A673 (cell line): ENCODE measurements at regions of chr1 and their contacts with region 1.

Region 1: GRCh38 chr1:23403735-23404486 is 20.6 kb downstream of the TCEA3 start:
- DNase-seq: peak; percentile 97
- H3K4me3 ChIP-seq: no peak overlapping the region
- H3K27ac ChIP-seq: peak overlapping the region; percentile 7
- H3K4me1 ChIP-seq: peaks cover 27% of the 10 kb centered on the region
- H3K27me3 ChIP-seq: no peaks in the 10 kb centered on the region
- CTCF ChIP-seq: peak; percentile 97

Region 2: GRCh38 chr1:22976461-22977243 is 427.3 kb before region 1 on chr1:
- CTCF ChIA-PET with region 1: no interaction called
- POLR2A ChIA-PET with region 1: no interaction called
- intact Hi-C with region 1: loop called (anchors 5 kb)
- DNase-seq: peak; percentile 90
- H3K4me3 ChIP-seq: no peak overlapping the region
- H3K27ac ChIP-seq: no peak overlapping the region
- H3K4me1 ChIP-seq: peaks cover 16% of the 10 kb centered on the region
- H3K27me3 ChIP-seq: no peaks in the 10 kb centered on the region
- CTCF ChIP-seq: peak; percentile 94

Region 3: DNA sequence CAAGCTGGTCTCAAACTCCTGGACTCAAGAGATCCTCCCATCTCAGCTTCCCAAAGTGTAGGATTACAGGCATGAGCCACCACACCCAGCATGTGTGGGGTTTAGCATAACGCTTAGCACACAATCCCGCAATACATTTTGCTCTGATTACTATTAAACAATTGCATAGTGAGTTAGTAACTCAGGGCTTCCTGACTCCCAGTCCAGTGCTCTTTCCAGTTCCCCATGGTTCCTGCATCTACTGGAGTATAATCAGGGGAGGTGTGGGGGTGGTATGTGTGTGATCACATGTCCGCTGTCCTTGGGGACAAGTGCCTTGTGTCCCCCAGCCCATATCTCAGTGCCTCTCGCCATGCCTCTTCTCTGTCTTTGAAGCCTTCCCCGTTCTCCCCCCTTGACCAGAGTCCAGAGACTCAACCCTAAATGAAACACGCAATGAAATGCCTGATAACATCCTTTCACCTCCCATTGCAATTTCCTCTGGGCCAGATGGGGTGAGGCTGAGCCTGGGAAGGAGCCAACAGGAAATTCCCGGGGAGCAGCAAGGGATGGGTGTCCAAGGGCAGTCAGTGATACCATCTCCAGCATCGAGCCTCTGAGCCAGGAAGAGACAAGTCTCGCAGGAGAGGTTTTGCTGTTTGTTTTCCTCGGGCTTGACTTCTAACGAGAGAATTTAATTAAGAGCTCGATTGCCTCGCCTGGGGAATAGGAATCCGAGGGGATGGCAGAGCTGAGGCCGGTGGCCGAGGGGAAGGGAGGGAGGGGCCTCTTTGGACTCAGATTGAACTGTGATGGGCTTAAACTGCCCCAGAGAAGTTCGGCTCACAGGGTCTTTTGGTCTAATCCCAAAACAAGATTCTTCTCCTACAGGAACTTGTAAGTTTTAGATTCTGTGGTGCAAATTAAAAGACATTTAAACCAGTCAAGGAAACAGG is 178.9 kb before region 1 on chr1:
- CTCF ChIA-PET with region 1: no interaction called
- POLR2A ChIA-PET with region 1: no interaction called
- intact Hi-C with region 1: loop called (anchors 10 kb)
- DNase-seq: peak; percentile 82
- H3K4me3 ChIP-seq: no peak overlapping the region
- H3K27ac ChIP-seq: no peak overlapping the region
- H3K4me1 ChIP-seq: peaks cover 14% of the 10 kb centered on the region
- H3K27me3 ChIP-seq: no peaks in the 10 kb centered on the region
- CTCF ChIP-seq: no peak

Region 4: GRCh38 chr1:23322770-23323169 is 81.1 kb before region 1 on chr1:
- CTCF ChIA-PET with region 1: no interaction called
- POLR2A ChIA-PET with region 1: no interaction called
- intact Hi-C with region 1: loop called (anchors 10 kb)
- DNase-seq: no peak
- H3K4me3 ChIP-seq: no peak overlapping the region
- H3K27ac ChIP-seq: no peak overlapping the region
- H3K4me1 ChIP-seq: no peaks in the 10 kb centered on the region
- H3K27me3 ChIP-seq: no peaks in the 10 kb centered on the region
- CTCF ChIP-seq: no peak

Region 5: DNA sequence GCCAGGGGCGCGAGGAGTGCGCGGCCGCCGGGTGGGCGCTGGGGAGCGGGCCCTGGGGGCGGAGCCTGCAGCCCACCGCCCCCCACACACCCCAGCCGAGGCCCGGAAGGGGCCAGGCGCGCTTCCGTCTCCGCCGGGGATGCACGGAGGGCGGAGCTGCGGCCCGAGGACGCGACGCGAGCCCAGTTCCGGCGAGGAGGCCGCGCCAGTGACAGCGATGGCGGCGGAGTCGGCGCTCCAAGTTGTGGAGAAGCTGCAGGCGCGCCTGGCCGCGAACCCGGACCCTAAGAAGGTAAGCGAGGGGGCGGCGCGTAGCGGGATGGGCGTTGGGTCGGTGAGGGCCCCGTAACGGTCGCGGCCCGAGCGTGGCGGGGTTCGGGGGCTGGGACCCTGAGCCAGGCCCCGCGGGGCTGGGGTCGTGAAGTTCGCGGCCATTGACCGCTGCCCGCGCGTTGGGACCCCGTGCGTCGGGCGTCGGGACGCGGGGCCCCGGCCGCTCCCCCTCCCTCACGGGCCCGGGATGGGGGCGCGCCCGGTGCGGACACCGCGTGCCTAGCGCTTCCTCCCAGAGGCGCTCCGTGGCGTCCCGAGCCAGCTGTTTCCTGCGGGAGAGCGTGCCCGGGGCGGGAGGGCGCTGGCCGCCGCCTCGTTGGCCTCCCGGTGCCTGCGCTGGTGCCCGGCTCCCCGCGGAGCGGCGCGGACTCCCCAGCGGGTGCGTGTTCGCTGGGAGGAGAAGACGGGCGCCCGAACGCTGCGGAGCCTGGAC is 339.6 kb after region 1 on chr1 and contains the start of gene ELOA:
- CTCF ChIA-PET with region 1: no interaction called
- POLR2A ChIA-PET with region 1: no interaction called
- intact Hi-C with region 1: no loop called
- DNase-seq: peak; percentile 84
- H3K4me3 ChIP-seq: peak within 1 kb of the TSS; percentile 99
- H3K27ac ChIP-seq: peak within 1 kb of the TSS; percentile 89
- H3K4me1 ChIP-seq: peaks cover 12% of the 10 kb centered on the region
- H3K27me3 ChIP-seq: no peaks in the 10 kb centered on the region
- CTCF ChIP-seq: no peak
- total RNA-seq, gene ELOA: 66.3 and 69.8 TPM in 2 replicates

Region 6: DNA sequence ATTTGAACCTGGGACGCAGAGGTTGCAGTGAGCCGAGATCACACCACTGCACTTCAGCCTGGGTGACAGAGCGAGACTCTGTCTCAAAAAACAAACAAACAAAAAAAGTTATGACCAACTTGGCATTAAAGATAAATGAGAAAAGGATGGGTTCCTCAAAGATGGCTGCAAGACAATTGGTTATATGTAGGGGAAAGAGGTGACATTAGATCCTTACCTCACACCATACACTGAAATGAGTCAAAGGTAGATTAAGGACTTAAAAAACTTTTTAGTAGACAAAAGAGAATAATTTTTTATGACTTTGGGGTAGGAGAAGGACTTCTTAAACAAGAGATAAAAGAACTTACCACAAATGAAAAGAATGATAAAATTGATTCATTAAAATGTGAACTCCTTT is 1753.9 kb after region 1 on chr1:
- CTCF ChIA-PET with region 1: no interaction called
- POLR2A ChIA-PET with region 1: no interaction called
- intact Hi-C with region 1: no loop called
- DNase-seq: no peak
- H3K4me3 ChIP-seq: no peak overlapping the region
- H3K27ac ChIP-seq: no peak overlapping the region
- H3K4me1 ChIP-seq: no peaks in the 10 kb centered on the region
- H3K27me3 ChIP-seq: peaks cover 8% of the 10 kb centered on the region
- CTCF ChIP-seq: no peak